ENCODE measurements at regions of chr6 and their contacts with region 1.

Region 1: GRCh38 chr6:31680840-31681671 is at the start of gene LY6G5C:
- DNase-seq: peak; percentile 79 to 86
- ATAC-seq: peak; percentile 84 to 94 (median 92)
- H3K4me3 ChIP-seq: peak within 1 kb of the TSS; percentile 42 to 68 (median 58)
- H3K27ac ChIP-seq: peak within 1 kb of the TSS in 9 of 10 donors; percentile 34 to 84 (median 66)
- H3K4me1 ChIP-seq: peaks cover 5 to 27% (median 22%) of the 10 kb centered on the region in 9 donors
- H3K27me3 ChIP-seq: no peaks in the 10 kb centered on the region
- CTCF ChIP-seq: peak; percentile 46 to 87 (median 78)
- total RNA-seq, gene LY6G5C: 1.2 to 3.5 (median 1.9) TPM

Region 2: GRCh38 chr6:31739639-31740396 is 58.8 kb after region 1 on chr6 and contains the start of gene MSH5:
- intact Hi-C with region 1: loop called in 1 of 10 experiments (anchors 5 kb)
- DNase-seq: peak; percentile 97 to 99
- ATAC-seq: peak; percentile 90 to 96 (median 94)
- H3K4me3 ChIP-seq: peak within 1 kb of the TSS; percentile 56 to 94 (median 76)
- H3K27ac ChIP-seq: peak within 1 kb of the TSS in 9 of 10 donors; percentile 20 to 98 (median 66)
- H3K4me1 ChIP-seq: peaks cover 4 to 42% (median 38%) of the 10 kb centered on the region in 9 donors
- H3K27me3 ChIP-seq: no peaks in the 10 kb centered on the region
- CTCF ChIP-seq: no peak
- total RNA-seq, gene MSH5: 0.89 to 4.3 (median 2.6) TPM

Region 3: GRCh38 chr6:31827286-31828079 is 146.4 kb after region 1 on chr6 and contains the start of gene HSPA1B:
- intact Hi-C with region 1: loop called in 7 of 10 experiments (anchors 1 to 10 kb)
- DNase-seq: peak; percentile 98 to 99
- ATAC-seq: peak; percentile 92 to 97 (median 94)
- H3K4me3 ChIP-seq: peak within 1 kb of the TSS; percentile 42 to 78 (median 66)
- H3K27ac ChIP-seq: peak within 1 kb of the TSS; percentile 85 to 99 (median 96)
- H3K4me1 ChIP-seq: peaks cover 9 to 54% (median 46%) of the 10 kb centered on the region in 9 donors
- H3K27me3 ChIP-seq: no peaks in the 10 kb centered on the region
- CTCF ChIP-seq: no peak
- total RNA-seq, gene HSPA1B: 126 to 258 (median 169) TPM

Region 4: DNA sequence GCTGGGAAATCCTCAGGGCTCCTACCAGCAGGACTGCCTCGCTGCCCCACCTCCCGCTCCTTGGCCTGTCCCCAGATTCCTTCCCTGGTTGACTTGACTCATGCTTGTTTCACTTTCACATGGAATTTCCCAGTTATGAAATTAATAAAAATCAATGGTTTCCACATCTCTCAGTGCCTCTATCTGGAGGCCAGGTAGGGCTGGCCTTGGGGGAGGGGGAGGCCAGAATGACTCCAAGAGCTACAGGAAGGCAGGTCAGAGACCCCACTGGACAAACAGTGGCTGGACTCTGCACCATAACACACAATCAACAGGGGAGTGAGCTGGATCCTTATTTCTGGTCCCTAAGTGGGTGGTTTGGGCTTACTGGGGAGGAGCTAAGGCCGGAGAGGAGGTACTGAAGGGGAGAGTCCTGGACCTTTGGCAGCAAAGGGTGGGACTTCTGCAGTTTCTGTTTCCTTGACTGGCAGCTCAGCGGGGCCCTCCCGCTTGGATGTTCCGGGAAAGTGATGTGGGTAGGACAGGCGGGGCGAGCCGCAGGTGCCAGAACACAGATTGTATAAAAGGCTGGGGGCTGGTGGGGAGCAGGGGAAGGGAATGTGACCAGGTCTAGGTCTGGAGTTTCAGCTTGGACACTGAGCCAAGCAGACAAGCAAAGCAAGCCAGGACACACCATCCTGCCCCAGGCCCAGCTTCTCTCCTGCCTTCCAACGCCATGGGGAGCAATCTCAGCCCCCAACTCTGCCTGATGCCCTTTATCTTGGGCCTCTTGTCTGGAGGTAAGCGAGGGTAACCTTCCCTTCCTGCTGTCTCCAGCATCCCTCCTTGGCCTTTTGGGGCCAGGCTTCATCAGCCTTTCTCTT is 264.7 kb after region 1 on chr6 and contains the start of gene CFB:
- intact Hi-C with region 1: loop called in 7 of 10 experiments (anchors 5 to 10 kb)
- DNase-seq: peak; percentile 54 to 58
- ATAC-seq: peak; percentile 66 to 88 (median 81)
- H3K4me3 ChIP-seq: peak within 1 kb of the TSS in 6 of 10 donors; percentile 26 to 37 (median 30)
- H3K27ac ChIP-seq: peak within 1 kb of the TSS; percentile 2 to 85 (median 66)
- H3K4me1 ChIP-seq: peaks cover 0 to 18% (median 4%) of the 10 kb centered on the region in 9 donors
- H3K27me3 ChIP-seq: peaks cover 0 to 21% (median 0%) of the 10 kb centered on the region in 7 donors
- CTCF ChIP-seq: no peak
- total RNA-seq, gene CFB: 2.8 to 24.4 (median 4.7) TPM

Region 5: DNA sequence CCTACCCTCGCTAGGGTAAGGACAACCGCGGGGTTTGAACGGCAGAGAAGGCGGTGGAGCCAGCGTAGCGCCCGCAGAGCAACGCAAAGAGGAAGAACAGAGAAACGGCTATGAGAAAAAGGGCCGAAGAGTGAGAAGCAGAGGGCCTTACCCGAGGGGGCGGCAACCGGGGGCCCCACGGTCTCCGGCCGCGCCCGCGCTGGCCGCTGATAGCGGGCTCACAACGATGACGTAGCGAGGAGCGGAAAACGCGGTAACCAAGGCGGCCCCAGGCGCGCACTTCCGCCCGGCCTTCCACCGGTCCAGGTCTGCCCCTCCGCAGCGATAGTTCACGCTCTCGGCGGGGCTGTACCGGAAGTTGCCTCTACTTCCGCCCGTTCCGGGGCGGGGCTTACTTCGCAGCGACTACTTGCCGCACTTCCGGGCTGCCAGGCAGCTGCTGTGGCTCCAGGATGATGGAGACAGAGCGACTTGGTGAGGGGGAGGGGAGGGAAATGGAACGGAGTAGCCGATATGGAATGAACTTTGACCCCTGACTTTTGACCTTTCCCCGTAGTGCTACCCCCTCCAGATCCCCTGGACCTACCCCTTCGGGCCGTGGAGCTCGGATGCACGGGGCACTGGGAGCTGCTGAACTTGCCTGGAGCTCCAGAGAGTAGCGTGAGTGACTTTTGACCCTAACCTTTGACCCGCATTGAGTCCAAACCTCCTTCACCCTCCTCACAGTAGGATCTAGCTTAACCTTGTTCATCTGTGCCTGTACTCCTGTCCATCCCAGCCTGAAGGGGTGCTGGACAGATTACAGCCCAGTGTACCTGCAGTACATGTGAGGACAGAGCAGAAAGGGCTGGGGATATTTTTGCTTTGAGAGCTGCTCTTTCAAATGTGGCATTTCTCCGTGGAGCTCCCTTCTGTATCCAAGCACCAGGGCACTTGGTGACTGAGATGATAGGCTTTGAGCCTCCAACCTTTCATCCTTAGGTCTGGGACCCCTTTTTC is 278.0 kb after region 1 on chr6 and contains the starts of genes NELFE and SKIC2:
- intact Hi-C with region 1: loop called in 6 of 10 experiments (anchors 5 kb)
- DNase-seq: peak; percentile 98
- ATAC-seq: peak; percentile 98 to 100 (median 100)
- H3K4me3 ChIP-seq: peak within 1 kb of the TSS; percentile 60 to 99 (median 90)
- H3K27ac ChIP-seq: peak within 1 kb of the TSS; percentile 54 to 95 (median 90)
- H3K4me1 ChIP-seq: peaks cover 6 to 27% (median 20%) of the 10 kb centered on the region in 9 donors
- H3K27me3 ChIP-seq: no peaks in the 10 kb centered on the region
- CTCF ChIP-seq: no peak
- total RNA-seq, gene NELFE: 38.2 to 52.8 (median 45.7) TPM
- total RNA-seq, gene SKIC2: 21.8 to 45.5 (median 32.2) TPM

Region 6: DNA sequence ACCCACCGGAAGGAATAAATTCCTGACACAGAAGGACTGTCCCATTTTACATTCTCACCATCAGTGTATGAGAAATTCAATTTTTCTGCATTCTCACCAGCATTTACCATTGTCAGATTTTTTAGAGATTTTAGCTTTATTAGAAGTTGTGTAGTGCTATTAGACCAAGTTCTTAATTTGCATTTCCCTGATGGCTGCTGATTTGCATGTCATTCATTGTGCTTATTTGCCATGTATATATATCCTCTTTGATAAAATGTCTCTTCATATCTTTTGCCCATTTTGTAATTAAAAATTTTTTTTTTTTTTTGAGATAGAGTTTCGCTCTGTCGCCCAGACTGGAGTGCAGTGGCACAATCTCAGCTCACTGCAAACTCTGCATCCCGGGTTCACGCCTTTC is 858.8 kb after region 1 on chr6:
- intact Hi-C with region 1: no loop called
- DNase-seq: no peak
- ATAC-seq: no peak
- H3K4me3 ChIP-seq: no peak overlapping the region
- H3K27ac ChIP-seq: no peak overlapping the region
- H3K4me1 ChIP-seq: no peaks in the 10 kb centered on the region
- H3K27me3 ChIP-seq: no peaks in the 10 kb centered on the region
- CTCF ChIP-seq: no peak

Measured in heart right ventricle (tissue), 16 donors.